B cell (primary cell): ENCODE measurements at regions of chr2 and their contacts with region 1.

Region 1: GRCh38 chr2:127619877-127620705 is 25.9 kb upstream of the GPR17 start:
- DNase-seq: no peak
- ATAC-seq: peak; percentile 20
- H3K4me3 ChIP-seq: peak overlapping the region in 3 of 5 experiments; percentile 19 to 52 (median 44)
- H3K4me3 Mint-ChIP-seq: peak overlapping the region; percentile 79
- H3K27ac ChIP-seq: peak overlapping the region in 1 of 2 donors; percentile 63
- H3K27ac Mint-ChIP-seq: peak overlapping the region; percentile 91
- H3K4me1 ChIP-seq: peaks cover 26 to 74% of the 10 kb centered on the region in 2 donors
- H3K4me1 Mint-ChIP-seq: peaks cover 79% of the 10 kb centered on the region
- H3K27me3 ChIP-seq: no peaks in the 10 kb centered on the region
- H3K27me3 Mint-ChIP-seq: no peaks in the 10 kb centered on the region
- CTCF ChIP-seq: no peak

Region 2: DNA sequence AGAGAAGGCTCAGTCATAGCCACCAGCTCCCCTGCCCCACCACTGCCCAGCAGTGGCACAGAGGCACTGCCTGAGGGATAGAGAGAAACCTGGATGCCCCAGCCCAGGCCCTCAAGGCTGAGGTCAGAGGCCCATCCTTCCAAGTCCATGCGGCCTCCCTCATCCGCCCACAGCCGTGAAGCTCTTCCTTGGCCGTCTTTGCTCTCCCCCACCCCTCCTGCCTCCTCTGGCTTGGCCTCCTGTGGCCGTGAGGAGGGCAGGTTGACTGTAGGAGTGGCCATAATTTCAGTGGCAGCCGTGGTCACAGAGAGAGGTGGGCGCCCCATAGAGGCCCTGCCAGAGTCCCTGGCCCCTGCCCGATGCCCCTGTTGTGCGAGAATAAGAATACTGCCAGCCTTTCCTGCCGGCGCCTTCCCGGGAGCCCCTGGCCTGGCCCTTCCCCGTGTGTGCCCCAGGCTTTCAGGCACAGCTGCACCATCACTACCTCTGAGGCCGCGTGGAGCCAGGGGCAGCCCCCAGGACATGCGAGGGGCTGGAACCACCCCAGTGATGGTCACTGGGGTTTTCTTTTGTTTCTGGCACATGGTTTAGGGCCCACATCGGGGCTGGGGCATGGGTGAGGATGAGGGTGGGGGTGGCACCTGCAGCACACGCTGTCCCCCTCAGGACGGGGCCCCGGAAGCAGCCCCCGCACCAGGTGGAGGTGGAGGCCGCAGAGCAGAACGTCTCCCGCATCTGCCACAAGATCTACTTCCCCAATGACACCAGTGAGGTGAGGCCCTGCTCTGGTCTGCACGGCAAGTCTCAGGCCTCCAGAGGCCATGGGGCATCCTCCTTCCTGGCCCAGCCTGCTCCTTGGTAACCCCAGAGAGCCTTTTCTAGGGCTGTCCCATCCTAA is 12.8 kb after region 1 on chr2:
- CTCF ChIA-PET with region 1: interaction called, 3 read pairs
- POLR2A ChIA-PET with region 1: interaction called, 8 read pairs
- intact Hi-C with region 1: loop called (anchors 1 kb)
- DNase-seq: peak; percentile 80
- ATAC-seq: peak; percentile 66
- H3K4me3 ChIP-seq: no peak overlapping the region
- H3K4me3 Mint-ChIP-seq: peak overlapping the region; percentile 77
- H3K27ac ChIP-seq: peak overlapping the region; percentile 80 to 92
- H3K27ac Mint-ChIP-seq: peak overlapping the region; percentile 96
- H3K4me1 ChIP-seq: peaks cover 86 to 97% of the 10 kb centered on the region in 2 donors
- H3K4me1 Mint-ChIP-seq: peaks cover 91% of the 10 kb centered on the region
- H3K27me3 ChIP-seq: no peaks in the 10 kb centered on the region
- H3K27me3 Mint-ChIP-seq: no peaks in the 10 kb centered on the region
- CTCF ChIP-seq: no peak

Region 3: DNA sequence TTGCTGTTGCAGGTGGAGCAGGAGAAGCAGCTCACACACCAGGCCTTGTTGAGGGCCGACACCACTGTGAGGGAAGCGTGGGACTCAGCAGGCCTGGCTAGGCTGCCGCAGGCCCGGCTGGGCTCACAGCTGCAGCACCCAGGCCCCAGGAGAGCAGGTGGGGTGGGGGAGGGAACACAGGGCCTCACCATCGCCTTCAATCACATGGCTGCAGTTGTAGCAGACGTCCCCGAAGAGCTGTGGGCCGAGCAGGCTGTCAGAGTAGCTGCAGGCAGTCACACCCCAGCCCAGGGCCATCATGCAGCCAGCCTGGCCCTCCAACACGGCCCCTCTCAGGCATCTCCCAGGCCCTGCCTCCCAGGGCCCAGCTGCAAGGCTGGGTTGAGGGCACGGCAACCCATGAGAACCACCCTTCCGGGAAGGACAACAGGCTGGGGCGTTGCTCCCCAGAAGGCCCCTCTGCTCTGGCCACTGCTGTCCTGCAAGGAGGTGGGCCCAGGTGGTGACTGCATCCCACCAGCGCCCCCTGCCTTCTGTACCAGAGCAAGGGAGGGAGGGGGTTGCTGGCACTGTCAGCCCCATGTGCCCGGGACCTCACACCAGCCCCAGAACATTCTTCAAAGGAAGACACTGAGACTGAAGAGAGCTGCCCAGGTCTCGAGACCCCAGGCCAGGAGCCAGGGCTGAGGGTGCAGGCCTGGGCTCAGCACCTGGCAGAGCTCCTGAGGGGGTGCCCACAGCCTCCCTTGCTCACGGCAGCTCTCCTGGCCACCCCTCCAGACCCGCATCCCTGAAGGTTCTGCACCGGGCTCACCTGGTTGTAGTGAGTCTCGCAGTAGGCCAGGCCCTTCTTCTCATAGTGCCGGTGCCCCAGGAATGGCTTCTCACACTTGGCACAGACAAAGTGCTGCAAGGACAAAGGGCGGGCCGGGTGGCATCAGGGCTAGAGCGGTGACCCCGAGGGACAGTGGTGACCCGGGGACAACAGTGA is 20.3 kb after region 1 on chr2:
- CTCF ChIA-PET with region 1: interaction called, 3 read pairs
- POLR2A ChIA-PET with region 1: interaction called, 7 read pairs
- intact Hi-C with region 1: loop called (anchors 2 kb)
- DNase-seq: peak; percentile 82
- ATAC-seq: peak; percentile 83
- H3K4me3 ChIP-seq: no peak overlapping the region
- H3K4me3 Mint-ChIP-seq: peak overlapping the region; percentile 57
- H3K27ac ChIP-seq: peak overlapping the region; percentile 62 to 76
- H3K27ac Mint-ChIP-seq: peak overlapping the region; percentile 95
- H3K4me1 ChIP-seq: peaks cover 69 to 77% of the 10 kb centered on the region in 2 donors
- H3K4me1 Mint-ChIP-seq: peaks cover 68% of the 10 kb centered on the region
- H3K27me3 ChIP-seq: no peaks in the 10 kb centered on the region
- H3K27me3 Mint-ChIP-seq: no peaks in the 10 kb centered on the region
- CTCF ChIP-seq: peak; percentile 29